PC-9 (cell line): ENCODE measurements at regions of chr11 and their contacts with region 1.

Region 1: GRCh38 chr11:63491636-63492372 is 837 bp upstream of the PLAAT5 start:
- DNase-seq: no peak
- H3K4me3 ChIP-seq: no peak overlapping the region
- H3K27ac ChIP-seq: no peak overlapping the region
- H3K4me1 ChIP-seq: no peaks in the 10 kb centered on the region
- H3K27me3 ChIP-seq: no peaks in the 10 kb centered on the region
- CTCF ChIP-seq: no peak

Region 2: DNA sequence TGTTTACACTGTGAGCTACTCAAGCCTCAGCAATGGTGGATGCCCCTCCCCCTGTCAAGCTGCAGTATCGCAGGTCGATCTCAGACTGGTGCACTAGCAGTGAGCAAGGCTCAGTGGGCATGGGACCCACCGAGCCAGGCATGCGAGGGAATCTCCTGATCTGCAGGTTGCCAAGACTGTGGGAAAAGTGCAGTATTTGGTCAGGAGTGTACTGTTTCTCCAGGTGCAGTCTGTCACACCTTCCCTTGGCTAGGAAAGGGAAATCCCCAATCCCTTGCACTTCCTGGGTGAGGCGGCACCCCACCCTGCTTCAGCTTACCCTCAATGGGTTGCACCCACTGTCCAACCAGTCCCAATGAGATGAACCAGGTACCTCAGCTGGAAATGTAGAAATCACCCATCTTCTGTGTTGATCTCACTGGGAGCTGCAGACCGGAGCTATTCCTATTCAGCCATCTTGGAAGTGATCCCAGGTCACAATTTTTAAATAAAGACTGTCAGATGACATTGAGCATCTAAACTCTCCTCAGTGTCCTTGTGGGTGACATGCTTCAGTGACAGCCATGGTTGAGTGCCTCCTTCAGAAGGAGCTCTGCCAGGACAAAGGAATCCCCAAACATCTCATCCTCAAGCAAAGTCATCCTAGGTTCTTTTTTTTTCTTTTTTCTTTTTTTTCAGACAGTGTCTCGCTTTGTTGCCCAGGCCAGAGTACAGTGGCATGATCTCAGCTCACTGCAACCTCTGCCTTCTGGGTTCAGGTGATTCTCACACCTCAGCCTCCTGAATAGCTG is 358.6 kb before region 1 on chr11:
- CTCF ChIA-PET with region 1: no interaction called
- POLR2A ChIA-PET with region 1: no interaction called
- intact Hi-C with region 1: no loop called
- DNase-seq: no peak
- H3K4me3 ChIP-seq: no peak overlapping the region
- H3K27ac ChIP-seq: no peak overlapping the region
- H3K4me1 ChIP-seq: no peaks in the 10 kb centered on the region
- H3K27me3 ChIP-seq: peaks cover 23% of the 10 kb centered on the region; the same call in 1 of the 2 replicates
- CTCF ChIP-seq: no peak

Region 3: GRCh38 chr11:63621931-63622782 is 130.4 kb after region 1 on chr11:
- CTCF ChIA-PET with region 1: interaction called, 13 read pairs
- POLR2A ChIA-PET with region 1: interaction called, 4 read pairs
- intact Hi-C with region 1: no loop called
- DNase-seq: peak; percentile 67 to 97
- H3K4me3 ChIP-seq: no peak overlapping the region
- H3K27ac ChIP-seq: no peak overlapping the region
- H3K4me1 ChIP-seq: peaks cover 22% of the 10 kb centered on the region
- H3K27me3 ChIP-seq: no peaks in the 10 kb centered on the region
- CTCF ChIP-seq: no peak

Region 4: DNA sequence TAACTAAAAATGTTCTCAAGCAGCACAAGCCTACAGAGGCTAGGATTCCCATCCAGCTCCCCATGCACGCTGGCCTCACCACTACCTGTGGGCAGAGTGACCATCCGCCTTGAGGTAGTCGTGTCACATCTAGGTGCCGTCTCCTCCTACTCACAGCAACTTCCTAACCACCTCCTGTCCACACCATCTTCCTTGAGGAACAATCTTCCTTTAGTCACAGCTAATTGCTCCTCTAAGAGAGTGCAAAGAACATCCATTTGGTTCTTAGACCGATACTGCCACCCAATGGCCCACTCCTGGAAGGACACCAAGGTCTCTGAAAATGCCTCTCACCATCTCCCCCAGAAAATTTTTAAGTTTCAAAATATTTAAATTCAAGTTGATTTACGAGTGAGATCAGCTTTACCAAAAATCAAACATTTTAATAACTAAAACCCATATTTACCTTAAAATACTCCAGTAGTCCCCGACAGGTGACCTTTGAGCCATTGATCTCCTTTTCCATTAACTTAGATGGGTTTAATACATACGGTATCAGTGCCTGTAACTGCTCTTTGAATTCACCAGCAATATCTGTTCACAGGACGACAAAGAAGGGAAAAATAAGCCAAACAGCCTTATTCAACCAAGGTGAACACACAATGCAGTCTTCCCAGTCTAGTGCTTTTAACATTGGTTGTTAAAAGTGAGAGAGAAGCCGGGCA is 144.1 kb after region 1 on chr11:
- CTCF ChIA-PET with region 1: no interaction called
- POLR2A ChIA-PET with region 1: no interaction called
- intact Hi-C with region 1: no loop called
- DNase-seq: peak; percentile 51 to 66
- H3K4me3 ChIP-seq: no peak overlapping the region
- H3K27ac ChIP-seq: no peak overlapping the region
- H3K4me1 ChIP-seq: no peaks in the 10 kb centered on the region
- H3K27me3 ChIP-seq: no peaks in the 10 kb centered on the region
- CTCF ChIP-seq: peak; percentile 94